BJ (cell line): ENCODE measurements at regions of chr19 and their contacts with region 1.

Region 1: GRCh38 chr19:50777754-50778303 is 7.6 kb downstream of the GPR32 start:
- DNase-seq: no peak
- H3K4me3 ChIP-seq: no peak overlapping the region
- H3K27me3 ChIP-seq: peaks cover 8% of the 10 kb centered on the region
- CTCF ChIP-seq: no peak

Region 2: GRCh38 chr19:50669302-50670101 is 108.3 kb before region 1 on chr19:
- CTCF ChIA-PET with region 1: interaction called, 21 read pairs
- POLR2A ChIA-PET with region 1: no interaction called
- DNase-seq: no peak
- H3K4me3 ChIP-seq: no peak overlapping the region
- H3K27me3 ChIP-seq: peaks cover 16% of the 10 kb centered on the region
- CTCF ChIP-seq: peak; percentile 88

Region 3: DNA sequence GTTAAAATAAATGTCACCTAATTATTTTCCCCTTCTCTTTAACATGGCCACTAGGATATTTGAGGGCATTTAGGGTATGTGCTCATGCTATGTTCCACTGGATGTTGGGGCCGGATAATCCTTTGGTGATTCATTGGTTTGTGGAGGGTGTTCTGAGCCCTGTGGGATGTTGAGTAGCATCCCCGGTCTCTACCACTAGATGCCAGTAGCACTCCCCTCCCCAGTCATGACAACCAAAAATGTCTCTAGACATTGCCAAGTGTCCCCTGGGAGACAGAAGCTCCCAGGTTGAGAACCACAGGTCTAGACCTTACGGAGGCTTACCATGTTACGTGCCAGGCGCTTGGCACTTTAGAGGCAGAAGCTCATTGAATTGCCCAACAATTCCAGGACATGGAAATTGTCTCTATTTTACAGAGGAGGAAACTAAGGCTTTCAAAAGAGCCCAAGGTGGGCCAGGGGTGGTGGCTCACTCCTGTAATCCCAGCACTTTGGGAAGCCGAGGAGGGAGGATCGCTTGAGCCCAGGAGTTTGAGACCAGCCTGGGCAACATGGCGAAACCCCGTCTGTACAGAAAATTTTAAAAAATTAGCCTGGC is 72.3 kb before region 1 on chr19:
- CTCF ChIA-PET with region 1: interaction called, 17 read pairs
- POLR2A ChIA-PET with region 1: no interaction called
- DNase-seq: no peak
- H3K4me3 ChIP-seq: no peak overlapping the region
- H3K27me3 ChIP-seq: no peaks in the 10 kb centered on the region
- CTCF ChIP-seq: peak; percentile 90

Region 4: GRCh38 chr19:50794439-50795237 is 16.8 kb after region 1 on chr19:
- CTCF ChIA-PET with region 1: interaction called, 17 read pairs
- POLR2A ChIA-PET with region 1: no interaction called
- DNase-seq: no peak
- H3K4me3 ChIP-seq: no peak overlapping the region
- H3K27me3 ChIP-seq: no peaks in the 10 kb centered on the region
- CTCF ChIP-seq: peak; percentile 26; the same call in 1 of the 2 replicates

Region 5: GRCh38 chr19:50812474-50812873 is 34.6 kb after region 1 on chr19:
- CTCF ChIA-PET with region 1: no interaction called
- POLR2A ChIA-PET with region 1: no interaction called
- DNase-seq: no peak
- H3K4me3 ChIP-seq: no peak overlapping the region
- H3K27me3 ChIP-seq: no peaks in the 10 kb centered on the region
- CTCF ChIP-seq: no peak

Region 6: GRCh38 chr19:50826492-50827240 is 48.8 kb after region 1 on chr19:
- CTCF ChIA-PET with region 1: no interaction called
- POLR2A ChIA-PET with region 1: no interaction called
- DNase-seq: no peak
- H3K4me3 ChIP-seq: no peak overlapping the region
- H3K27me3 ChIP-seq: peaks cover 2% of the 10 kb centered on the region
- CTCF ChIP-seq: no peak